Tibial artery (tissue), 4 donors: ENCODE measurements at regions of chr6 and their contacts with region 1.

Region 1: GRCh38 chr6:132483779-132484679 is 28.9 kb downstream of the STX7 start:
- DNase-seq: no peak
- H3K4me3 ChIP-seq: no peak overlapping the region
- H3K27ac ChIP-seq: no peak overlapping the region
- H3K4me1 ChIP-seq: peaks cover 0 to 29% (median 2%) of the 10 kb centered on the region in 4 donors
- H3K27me3 ChIP-seq: no peaks in the 10 kb centered on the region
- CTCF ChIP-seq: peak; percentile 70 to 72

Region 2: DNA sequence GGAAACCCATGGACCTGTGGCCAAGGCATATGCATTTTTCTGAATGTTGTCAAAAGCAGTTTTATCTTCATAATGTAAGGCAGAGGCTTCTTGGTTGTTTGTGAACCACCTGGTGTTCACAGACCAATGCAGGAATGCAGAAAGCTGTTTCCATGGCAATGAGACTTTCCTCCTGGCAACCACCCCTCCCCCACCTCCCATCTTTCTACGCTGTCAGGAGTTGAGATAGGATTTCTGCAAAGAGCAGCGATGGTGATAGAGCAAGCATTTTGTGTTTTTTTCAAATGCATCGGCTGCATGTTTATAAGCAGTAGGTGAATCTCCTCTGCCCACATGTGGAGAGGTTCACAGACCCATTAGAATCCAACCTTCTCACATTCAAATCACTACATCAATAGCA is 1770.9 kb before region 1 on chr6:
- intact Hi-C with region 1: no loop called
- DNase-seq: no peak
- H3K4me3 ChIP-seq: no peak overlapping the region
- H3K27ac ChIP-seq: no peak overlapping the region
- H3K4me1 ChIP-seq: no peaks in the 10 kb centered on the region
- H3K27me3 ChIP-seq: no peaks in the 10 kb centered on the region
- CTCF ChIP-seq: no peak

Region 3: GRCh38 chr6:132279592-132280139 is 204.4 kb before region 1 on chr6:
- intact Hi-C with region 1: loop called (anchors 10 kb)
- DNase-seq: peak; percentile 71 to 77
- H3K4me3 ChIP-seq: peak overlapping the region; percentile 37 to 43
- H3K27ac ChIP-seq: no peak overlapping the region
- H3K4me1 ChIP-seq: no peaks in the 10 kb centered on the region
- H3K27me3 ChIP-seq: peaks cover 0 to 4% of the 10 kb centered on the region in 2 donors
- CTCF ChIP-seq: peak; percentile 83 to 92

Region 4: GRCh38 chr6:132300323-132300949 is 183.6 kb before region 1 on chr6:
- intact Hi-C with region 1: loop called (anchors 5 kb)
- DNase-seq: no peak
- H3K4me3 ChIP-seq: no peak overlapping the region
- H3K27ac ChIP-seq: no peak overlapping the region
- H3K4me1 ChIP-seq: no peaks in the 10 kb centered on the region
- H3K27me3 ChIP-seq: no peaks in the 10 kb centered on the region
- CTCF ChIP-seq: peak; percentile 40 to 46